H1 (cell line): ENCODE measurements at regions of chr2 and their contacts with region 1.

Region 1: GRCh38 chr2:199488772-199489400 is 31.1 kb upstream of the SATB2 start:
- DNase-seq: peak in 1 of 2 experiments; percentile 88
- H3K4me3 ChIP-seq: no peak overlapping the region
- H3K27ac ChIP-seq: no peak overlapping the region
- H3K4me1 ChIP-seq: 0 out of 7 replicates have a peak, but pooled peaks cover 0 to 2% (median 0%) of the 10 kb centered on the region in 4 experiments
- H3K27me3 ChIP-seq: no peaks in the 10 kb centered on the region
- CTCF ChIP-seq: peak; percentile 75 to 88 (median 85)
- EP300 ChIP-seq: no peak
- POLR2A ChIP-seq: no peak
- RAD21 ChIP-seq: peak; percentile 73 to 82

Region 2: GRCh38 chr2:199471443-199472057 is 17.3 kb before region 1 on chr2:
- CTCF ChIA-PET with region 1: interaction called, 298 read pairs
- POLR2A ChIA-PET with region 1: no interaction called
- DNase-seq: peak in 1 of 2 experiments; percentile 94
- H3K4me3 ChIP-seq: peak overlapping the region; percentile 29 to 60 (median 40); a peak in 7 of 8 replicates
- H3K27ac ChIP-seq: no peak overlapping the region
- H3K4me1 ChIP-seq: peaks cover 8 to 23% (median 14%) of the 10 kb centered on the region in 4 experiments
- H3K27me3 ChIP-seq: peaks cover 41 to 61% (median 57%) of the 10 kb centered on the region in 4 experiments
- CTCF ChIP-seq: peak in 2 of 3 experiments; percentile 81 to 93; a peak in 3 of 4 replicates
- EP300 ChIP-seq: 0 out of 3 replicates have a peak, but pooled peaks of 1 of the 2 experiments have one; percentile 23
- POLR2A ChIP-seq: no peak
- RAD21 ChIP-seq: peak; percentile 54 to 70

Region 3: GRCh38 chr2:199477277-199477834 is 11.5 kb before region 1 on chr2:
- CTCF ChIA-PET with region 1: interaction called, 298 read pairs
- POLR2A ChIA-PET with region 1: no interaction called
- DNase-seq: peak in 1 of 2 experiments; percentile 7
- H3K4me3 ChIP-seq: no peak overlapping the region
- H3K27ac ChIP-seq: no peak overlapping the region
- H3K4me1 ChIP-seq: no peaks in the 10 kb centered on the region
- H3K27me3 ChIP-seq: peaks cover 0 to 6% (median 2%) of the 10 kb centered on the region in 4 experiments; a peak in 4 of 7 replicates
- CTCF ChIP-seq: no peak
- EP300 ChIP-seq: no peak
- POLR2A ChIP-seq: no peak
- RAD21 ChIP-seq: no peak

Region 4: DNA sequence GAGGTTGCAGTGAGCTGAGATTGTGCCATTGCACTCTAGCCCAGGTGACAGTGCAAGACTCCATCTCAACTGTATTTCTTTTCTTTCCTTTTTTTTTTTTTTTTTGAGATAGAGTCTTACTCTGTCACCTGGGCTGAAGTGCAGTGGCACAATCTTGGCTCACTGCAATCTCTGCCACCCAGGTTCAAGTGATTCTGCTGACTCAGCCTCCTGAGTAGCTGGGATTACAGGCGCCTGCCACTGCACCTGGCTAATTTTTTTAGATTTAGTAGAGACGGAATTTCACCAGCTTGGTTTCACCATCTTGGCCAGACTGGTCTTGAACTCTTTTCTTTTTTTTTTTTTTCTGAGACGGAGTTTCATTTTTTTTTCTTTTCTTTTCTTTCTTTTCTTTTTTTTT is 10.1 kb after region 1 on chr2:
- CTCF ChIA-PET with region 1: interaction called, 19 read pairs
- POLR2A ChIA-PET with region 1: no interaction called
- DNase-seq: no peak
- H3K4me3 ChIP-seq: no peak overlapping the region
- H3K27ac ChIP-seq: no peak overlapping the region
- H3K4me1 ChIP-seq: no peaks in the 10 kb centered on the region
- H3K27me3 ChIP-seq: no peaks in the 10 kb centered on the region
- CTCF ChIP-seq: no peak
- EP300 ChIP-seq: no peak
- POLR2A ChIP-seq: no peak
- RAD21 ChIP-seq: no peak

Region 5: DNA sequence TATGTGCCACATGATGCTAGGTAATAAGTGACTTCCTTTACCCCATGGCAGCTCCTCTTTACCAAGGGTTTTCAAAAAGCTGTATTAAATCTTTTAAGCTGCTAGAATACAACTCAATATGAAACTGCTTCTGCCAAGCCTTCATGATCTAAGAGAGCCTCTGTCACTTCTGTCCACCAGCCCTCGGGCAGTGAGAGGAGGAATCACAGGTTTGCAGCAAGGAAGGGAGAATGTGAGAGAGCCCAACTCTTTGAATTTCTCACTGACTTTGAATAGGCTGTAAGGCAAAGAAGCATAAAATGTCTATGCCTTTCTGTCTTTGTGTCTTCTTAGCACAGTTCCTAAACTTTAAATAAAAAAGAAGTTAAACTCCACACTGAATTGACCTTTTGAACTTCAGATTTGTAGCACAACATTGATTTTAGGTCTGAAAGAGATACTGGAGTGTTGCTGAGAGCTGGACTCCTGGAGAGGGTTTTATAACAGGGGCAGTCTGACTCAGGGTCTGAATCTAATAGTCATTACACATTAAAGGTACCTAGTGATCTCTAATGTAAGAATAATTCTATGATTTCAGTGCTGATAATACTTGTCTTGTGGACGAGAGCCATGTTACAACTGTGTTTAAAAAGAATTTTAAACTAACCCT is 17.0 kb after region 1 on chr2:
- CTCF ChIA-PET with region 1: interaction called, 14 read pairs
- POLR2A ChIA-PET with region 1: no interaction called
- DNase-seq: no peak
- H3K4me3 ChIP-seq: no peak overlapping the region
- H3K27ac ChIP-seq: no peak overlapping the region
- H3K4me1 ChIP-seq: no peaks in the 10 kb centered on the region
- H3K27me3 ChIP-seq: no peaks in the 10 kb centered on the region
- CTCF ChIP-seq: no peak
- EP300 ChIP-seq: no peak
- POLR2A ChIP-seq: no peak
- RAD21 ChIP-seq: no peak

Region 6: GRCh38 chr2:199862788-199863187 is 373.9 kb after region 1 on chr2:
- CTCF ChIA-PET with region 1: no interaction called
- POLR2A ChIA-PET with region 1: no interaction called
- DNase-seq: no peak
- H3K4me3 ChIP-seq: no peak overlapping the region
- H3K27ac ChIP-seq: no peak overlapping the region
- H3K4me1 ChIP-seq: peaks cover 0 to 4% (median 0%) of the 10 kb centered on the region in 4 experiments; a peak in 1 of 7 replicates
- H3K27me3 ChIP-seq: no peaks in the 10 kb centered on the region
- CTCF ChIP-seq: no peak
- EP300 ChIP-seq: no peak
- POLR2A ChIP-seq: no peak
- RAD21 ChIP-seq: no peak